Activated CD8-positive, alpha-beta T cell treated with anti-CD3 and anti-CD28 coated beads, Interleukin-2, amount 10 ng/mL, durations not matched to agents 7 days and 5 days (primary cell): ENCODE measurements at regions of chr7 and their contacts with region 1.

Region 1: DNA sequence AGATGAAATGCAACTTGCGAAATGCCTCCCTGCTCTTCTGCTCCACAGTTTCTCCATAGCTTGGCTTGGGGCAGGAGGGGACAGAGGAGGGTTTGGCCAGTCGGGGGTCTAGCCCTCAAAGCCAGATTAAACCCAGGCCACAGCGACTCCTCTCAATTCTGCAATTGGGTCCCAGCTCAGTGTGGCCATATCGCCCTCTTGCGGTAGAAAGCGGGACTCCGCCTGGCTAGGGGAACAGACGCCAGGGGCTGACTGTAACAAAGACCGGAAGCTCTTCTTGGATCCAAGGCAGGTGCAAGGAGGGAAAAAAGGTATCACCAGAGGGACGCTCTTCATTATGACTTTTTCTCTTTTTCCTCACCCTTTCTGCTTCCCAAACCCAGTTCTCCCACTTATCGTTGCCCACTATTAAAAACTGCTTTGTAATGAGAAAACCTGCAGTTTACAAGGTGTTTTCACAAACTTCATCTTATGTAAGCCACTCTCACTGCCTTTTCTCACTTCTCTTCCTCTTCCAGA is 36.6 kb upstream of the TNPO3 start:
- DNase-seq: peak; percentile 91
- ATAC-seq: peak; percentile 87
- H3K4me3 Mint-ChIP-seq: no peak overlapping the region
- H3K27ac Mint-ChIP-seq: no peak overlapping the region
- H3K4me1 Mint-ChIP-seq: peaks cover 39% of the 10 kb centered on the region
- H3K27me3 Mint-ChIP-seq: peaks cover 2% of the 10 kb centered on the region

Region 2: DNA sequence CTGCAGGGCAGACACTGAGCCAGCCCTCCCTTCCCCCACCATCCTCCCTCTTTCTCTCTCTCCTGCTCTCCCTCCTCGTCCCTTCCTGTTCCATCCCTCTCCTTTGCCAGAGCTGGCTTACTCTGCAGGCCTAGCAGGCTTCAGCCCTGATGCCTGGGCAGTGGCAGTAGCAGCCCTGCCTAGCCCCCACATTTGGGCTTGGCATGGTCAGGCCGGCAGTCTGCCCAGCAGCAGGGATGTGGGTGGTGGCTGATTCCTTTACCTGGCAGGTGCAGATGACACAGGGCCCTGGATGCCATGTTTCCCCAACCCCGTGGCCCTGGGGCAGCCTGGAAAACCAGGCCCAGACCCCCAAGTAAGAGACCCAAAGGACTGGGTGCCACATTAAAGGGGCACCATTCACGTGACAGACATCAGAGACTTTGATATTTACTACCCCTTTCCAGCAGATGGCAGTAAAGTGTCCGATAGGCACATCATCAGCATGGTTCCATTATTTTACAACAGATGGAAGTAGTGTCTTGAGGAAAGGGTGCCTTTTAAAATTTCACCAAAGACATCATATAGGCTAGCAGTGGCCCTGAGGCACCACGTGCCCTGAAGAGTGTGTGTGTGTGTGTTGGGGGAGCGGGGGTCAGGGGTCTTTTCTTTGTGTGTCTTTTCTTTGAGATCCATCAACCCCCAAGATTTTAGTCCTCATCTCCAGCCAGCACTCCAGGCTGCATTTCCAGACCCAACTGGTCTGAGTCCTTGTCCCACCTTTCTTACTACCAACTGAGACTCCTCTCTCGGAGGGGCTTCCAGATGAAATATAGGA is 187.0 kb before region 1 on chr7:
- CTCF ChIA-PET with region 1: interaction called, 23 read pairs
- POLR2A ChIA-PET with region 1: no interaction called
- DNase-seq: peak; percentile 52
- ATAC-seq: peak; percentile 72
- H3K4me3 Mint-ChIP-seq: no peak overlapping the region
- H3K27ac Mint-ChIP-seq: no peak overlapping the region
- H3K4me1 Mint-ChIP-seq: peaks cover 3% of the 10 kb centered on the region
- H3K27me3 Mint-ChIP-seq: peaks cover 19% of the 10 kb centered on the region

Region 3: DNA sequence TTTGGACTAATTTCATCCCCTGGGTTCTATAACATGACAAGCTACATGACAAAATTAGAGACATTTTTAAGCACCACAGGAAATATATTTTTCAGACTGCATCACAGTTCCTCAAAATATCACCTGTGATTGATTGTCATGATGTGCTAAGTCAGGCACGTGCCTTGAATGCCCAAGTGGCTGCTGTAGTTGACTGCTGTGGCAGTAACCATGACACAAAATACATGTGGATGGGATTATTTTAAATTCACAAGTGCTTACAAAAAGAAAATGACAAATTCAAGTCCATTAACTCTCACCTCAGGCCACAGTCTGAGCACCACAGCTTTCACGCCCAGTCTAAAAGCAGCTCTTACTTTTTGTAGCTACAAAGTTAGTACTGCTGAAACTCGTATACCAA is 82.1 kb before region 1 on chr7:
- CTCF ChIA-PET with region 1: interaction called, 16 read pairs
- POLR2A ChIA-PET with region 1: no interaction called
- DNase-seq: no peak
- ATAC-seq: no peak
- H3K4me3 Mint-ChIP-seq: no peak overlapping the region
- H3K27ac Mint-ChIP-seq: no peak overlapping the region
- H3K4me1 Mint-ChIP-seq: peaks cover 16% of the 10 kb centered on the region
- H3K27me3 Mint-ChIP-seq: no peaks in the 10 kb centered on the region

Region 4: DNA sequence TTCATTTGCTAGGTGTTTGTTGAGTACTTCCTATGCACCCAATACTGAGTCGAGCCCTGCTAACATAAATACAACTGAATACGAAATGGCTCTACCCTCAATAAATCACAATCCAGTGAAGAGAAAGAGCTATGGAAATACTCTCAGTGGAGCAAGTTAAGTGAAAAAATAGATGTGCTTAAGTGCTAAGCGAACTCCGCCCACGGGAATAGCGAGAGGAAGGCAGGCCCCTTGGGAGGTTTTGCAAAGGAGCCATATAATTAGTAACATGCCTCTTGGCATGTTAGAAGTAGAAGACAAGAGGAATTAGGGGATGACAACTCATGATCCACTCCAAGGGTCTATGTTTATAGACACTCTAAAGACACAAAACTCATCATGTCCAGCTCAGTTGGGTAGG is 10.2 kb after region 1 on chr7:
- CTCF ChIA-PET with region 1: interaction called, 11 read pairs
- POLR2A ChIA-PET with region 1: no interaction called
- DNase-seq: no peak
- ATAC-seq: no peak
- H3K4me3 Mint-ChIP-seq: no peak overlapping the region
- H3K27ac Mint-ChIP-seq: no peak overlapping the region
- H3K4me1 Mint-ChIP-seq: no peaks in the 10 kb centered on the region
- H3K27me3 Mint-ChIP-seq: peaks cover 3% of the 10 kb centered on the region

Region 5: GRCh38 chr7:129144095-129144833 is 52.7 kb after region 1 on chr7 and contains the start of gene TSPAN33:
- CTCF ChIA-PET with region 1: interaction called, 10 read pairs
- POLR2A ChIA-PET with region 1: no interaction called
- DNase-seq: peak; percentile 71
- ATAC-seq: peak; percentile 99
- H3K4me3 Mint-ChIP-seq: peak within 1 kb of the TSS; percentile 84
- H3K27ac Mint-ChIP-seq: no peak within 1 kb of the TSS
- H3K4me1 Mint-ChIP-seq: peaks cover 16% of the 10 kb centered on the region
- H3K27me3 Mint-ChIP-seq: peaks cover 28% of the 10 kb centered on the region
- total RNA-seq, gene TSPAN33: 2.7 to 2.8 TPM